ENCODE measurements at regions of chr5 and their contacts with region 1.

Region 1: DNA sequence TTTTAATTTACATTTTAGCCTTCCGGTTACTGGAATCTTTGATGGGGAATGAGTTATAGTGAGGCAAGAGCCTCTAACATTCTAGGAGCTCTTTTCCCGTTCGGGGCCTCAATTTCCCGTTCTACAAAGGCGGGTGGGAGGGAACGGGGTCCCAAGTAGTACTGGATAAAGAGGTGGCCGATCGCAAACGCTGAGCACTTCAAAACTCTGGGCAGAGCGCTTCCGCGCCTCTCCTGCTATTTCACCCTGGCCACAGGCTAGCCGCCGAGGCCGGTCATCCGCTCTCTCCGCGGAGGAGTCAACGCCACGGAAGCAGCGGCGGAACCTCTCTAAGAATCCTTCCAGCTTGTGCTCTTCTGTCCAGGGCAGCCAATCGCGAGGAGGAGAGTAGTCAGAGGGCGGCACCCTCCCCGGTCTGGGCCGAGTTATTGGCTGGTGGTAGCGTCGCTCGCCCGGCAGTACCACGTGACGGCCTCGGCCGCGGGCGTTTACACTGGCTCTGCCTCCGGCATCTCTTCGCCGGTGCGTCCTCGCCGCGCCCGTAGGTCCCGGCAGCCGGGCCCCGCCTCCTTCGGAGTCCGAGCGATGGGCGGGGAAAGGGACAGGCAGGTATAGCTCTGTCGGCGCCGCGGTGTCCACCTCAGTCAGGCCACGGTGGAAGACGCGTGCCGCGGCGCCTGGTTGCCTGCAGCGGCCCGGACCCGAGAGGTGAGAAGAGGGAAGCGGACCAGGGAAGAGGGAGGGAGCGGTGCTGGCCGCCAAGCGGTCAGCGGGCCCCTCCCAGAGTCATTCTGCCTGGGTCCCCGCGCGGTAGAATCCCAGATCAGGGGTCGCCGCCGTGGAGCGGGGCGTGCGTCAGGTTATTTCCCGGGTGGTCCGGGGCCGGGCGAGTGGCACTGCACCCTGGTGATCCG is at the start of gene SLC26A2:
- DNase-seq: peak; percentile 99
- H3K27ac ChIP-seq: peak within 1 kb of the TSS; percentile 90
- CTCF ChIP-seq: no peak

Region 2: GRCh38 chr5:149834246-149834855 is 126.2 kb before region 1 on chr5:
- CTCF ChIA-PET with region 1: interaction called, 48 read pairs
- POLR2A ChIA-PET with region 1: interaction called, 4 read pairs
- DNase-seq: peak; percentile 64
- H3K27ac ChIP-seq: peak overlapping the region; percentile 5; the same call in 1 of the 2 replicates
- CTCF ChIP-seq: peak; percentile 82

Region 3: DNA sequence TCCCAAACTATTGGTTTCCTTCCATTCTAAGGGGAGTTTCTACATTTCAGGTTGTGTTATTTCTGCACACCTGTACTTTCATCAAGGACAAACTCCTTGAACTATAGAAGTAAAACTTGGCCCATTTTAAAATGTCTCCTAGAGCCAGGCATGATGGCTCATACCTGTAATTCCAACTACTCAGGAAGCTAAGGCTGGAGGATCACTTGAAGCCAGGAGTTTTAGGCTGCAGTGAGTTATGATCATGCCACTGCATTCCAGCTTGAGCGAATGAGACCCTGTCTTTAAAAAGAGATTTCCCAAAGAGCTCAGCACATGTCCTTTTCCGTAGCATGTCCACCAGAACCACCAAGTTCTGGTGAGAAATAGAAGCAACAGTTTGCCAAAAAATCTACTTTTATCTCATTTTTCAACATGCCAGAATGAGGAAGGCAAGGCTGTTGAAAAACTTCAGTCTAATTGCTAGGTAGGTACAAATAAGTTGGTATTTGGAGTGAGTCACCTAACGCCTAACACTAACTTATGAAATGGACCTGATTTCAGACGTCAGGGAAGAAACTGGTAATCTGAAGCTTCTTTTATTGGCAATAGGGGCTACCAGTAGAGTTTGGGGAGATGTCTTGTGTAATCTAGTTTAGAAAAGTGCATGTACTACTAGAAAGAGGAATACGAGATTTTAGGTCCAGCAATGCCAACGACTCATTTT is 11.7 kb before region 1 on chr5:
- CTCF ChIA-PET with region 1: interaction called, 16 read pairs
- POLR2A ChIA-PET with region 1: no interaction called
- DNase-seq: no peak
- H3K27ac ChIP-seq: no peak overlapping the region
- CTCF ChIP-seq: no peak

Region 4: GRCh38 chr5:149990518-149991376 is 30.2 kb after region 1 on chr5:
- CTCF ChIA-PET with region 1: interaction called, 15 read pairs
- POLR2A ChIA-PET with region 1: interaction called, 4 read pairs
- DNase-seq: peak; percentile 88
- H3K27ac ChIP-seq: no peak overlapping the region
- CTCF ChIP-seq: peak; percentile 97